ENCODE measurements at regions of chr11 and their contacts with region 1.

Region 1: GRCh38 chr11:6443269-6444003 is 2.6 kb upstream of the HPX start:
- DNase-seq: no peak
- H3K4me3 ChIP-seq: no peak overlapping the region
- CTCF ChIP-seq: peak; percentile 91

Region 2: DNA sequence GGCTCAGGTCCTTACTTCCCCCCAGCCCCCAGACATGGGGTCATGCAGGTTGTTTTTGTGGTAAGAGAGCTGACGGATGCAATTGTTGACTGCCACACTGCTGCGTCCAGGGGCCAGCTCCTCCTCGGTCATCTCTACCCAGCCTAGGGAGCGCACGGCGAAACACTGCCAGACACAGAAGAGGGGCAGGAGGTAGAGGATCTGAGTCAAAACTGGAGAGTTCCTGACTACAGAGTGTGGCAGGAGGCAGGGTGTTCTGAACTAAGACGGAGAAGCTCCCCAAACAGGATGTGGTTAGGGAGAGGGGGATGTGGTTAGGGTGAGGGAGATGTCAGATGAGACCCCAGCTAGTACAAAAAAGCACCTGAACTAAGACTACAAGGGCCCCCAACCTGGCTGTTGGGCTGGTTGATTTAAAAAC is 40.9 kb before region 1 on chr11:
- CTCF ChIA-PET with region 1: interaction called, 10 read pairs
- POLR2A ChIA-PET with region 1: no interaction called
- DNase-seq: no peak
- H3K4me3 ChIP-seq: no peak overlapping the region
- CTCF ChIP-seq: no peak

Region 3: GRCh38 chr11:6419009-6419631 is 24.3 kb before region 1 on chr11 and contains the start of gene APBB1:
- CTCF ChIA-PET with region 1: interaction called, 154 read pairs
- POLR2A ChIA-PET with region 1: interaction called, 4 read pairs
- DNase-seq: no peak
- H3K4me3 ChIP-seq: peak within 1 kb of the TSS; percentile 80
- CTCF ChIP-seq: peak; percentile 16

Region 4: GRCh38 chr11:6458352-6459098 is 15.1 kb after region 1 on chr11:
- CTCF ChIA-PET with region 1: interaction called, 192 read pairs
- POLR2A ChIA-PET with region 1: no interaction called
- DNase-seq: no peak
- H3K4me3 ChIP-seq: no peak overlapping the region
- CTCF ChIP-seq: no peak

Region 5: GRCh38 chr11:6505577-6506240 is 62.3 kb after region 1 on chr11:
- CTCF ChIA-PET with region 1: interaction called, 13 read pairs
- POLR2A ChIA-PET with region 1: no interaction called
- DNase-seq: peak; percentile 36
- H3K4me3 ChIP-seq: no peak overlapping the region
- CTCF ChIP-seq: peak; percentile 46

Measured in AG04449 (cell line).